ENCODE measurements at regions of chr12 and their contacts with region 1.

Region 1: GRCh38 chr12:93733358-93733757 is 56.2 kb downstream of the CRADD start:
- DNase-seq: peak; percentile 14 to 31
- ATAC-seq: peak; percentile 42 to 83 (median 62)
- H3K4me3 ChIP-seq: no peak overlapping the region
- H3K27ac ChIP-seq: no peak overlapping the region
- H3K4me1 ChIP-seq: peaks cover 0 to 26% (median 17%) of the 10 kb centered on the region in 9 donors
- H3K27me3 ChIP-seq: no peaks in the 10 kb centered on the region
- CTCF ChIP-seq: no peak

Region 2: DNA sequence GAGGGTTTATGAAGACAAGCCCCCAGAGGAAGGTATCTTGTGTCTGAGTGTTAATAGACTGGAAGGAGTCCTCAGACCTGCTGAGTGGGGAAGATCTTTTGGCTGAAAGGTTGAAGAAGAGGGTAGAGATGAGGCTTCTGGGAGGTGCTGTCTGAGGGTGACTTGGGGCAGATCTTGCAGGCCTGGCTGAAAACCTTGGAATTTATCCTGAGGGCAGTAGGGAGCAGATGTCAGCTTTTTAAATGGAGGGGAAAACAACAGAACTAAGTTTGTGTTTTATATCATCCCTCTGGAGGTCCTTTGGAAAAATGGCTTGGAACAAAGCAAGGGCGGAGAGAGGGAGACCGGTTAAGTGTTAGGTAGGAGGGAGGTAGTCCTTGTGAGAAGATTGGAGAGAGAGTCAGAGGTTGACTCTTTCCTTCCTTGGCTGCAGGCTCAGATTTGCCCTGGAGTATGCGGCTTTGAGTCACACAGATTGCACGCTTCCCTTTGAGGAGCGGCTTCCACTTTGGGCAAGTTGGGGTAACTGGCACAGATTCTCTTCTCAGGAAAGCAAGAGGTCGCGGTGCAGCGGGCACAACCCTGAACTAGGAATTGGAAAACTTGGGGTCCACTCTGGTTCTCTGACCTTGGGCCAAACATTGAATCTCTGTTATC is 151.1 kb before region 1 on chr12:
- intact Hi-C with region 1: loop called in 1 of 10 experiments (anchors 5 kb)
- DNase-seq: no peak
- ATAC-seq: no peak
- H3K4me3 ChIP-seq: no peak overlapping the region
- H3K27ac ChIP-seq: no peak overlapping the region
- H3K4me1 ChIP-seq: peaks cover 0 to 38% (median 28%) of the 10 kb centered on the region in 9 donors
- H3K27me3 ChIP-seq: no peaks in the 10 kb centered on the region
- CTCF ChIP-seq: no peak

Region 3: DNA sequence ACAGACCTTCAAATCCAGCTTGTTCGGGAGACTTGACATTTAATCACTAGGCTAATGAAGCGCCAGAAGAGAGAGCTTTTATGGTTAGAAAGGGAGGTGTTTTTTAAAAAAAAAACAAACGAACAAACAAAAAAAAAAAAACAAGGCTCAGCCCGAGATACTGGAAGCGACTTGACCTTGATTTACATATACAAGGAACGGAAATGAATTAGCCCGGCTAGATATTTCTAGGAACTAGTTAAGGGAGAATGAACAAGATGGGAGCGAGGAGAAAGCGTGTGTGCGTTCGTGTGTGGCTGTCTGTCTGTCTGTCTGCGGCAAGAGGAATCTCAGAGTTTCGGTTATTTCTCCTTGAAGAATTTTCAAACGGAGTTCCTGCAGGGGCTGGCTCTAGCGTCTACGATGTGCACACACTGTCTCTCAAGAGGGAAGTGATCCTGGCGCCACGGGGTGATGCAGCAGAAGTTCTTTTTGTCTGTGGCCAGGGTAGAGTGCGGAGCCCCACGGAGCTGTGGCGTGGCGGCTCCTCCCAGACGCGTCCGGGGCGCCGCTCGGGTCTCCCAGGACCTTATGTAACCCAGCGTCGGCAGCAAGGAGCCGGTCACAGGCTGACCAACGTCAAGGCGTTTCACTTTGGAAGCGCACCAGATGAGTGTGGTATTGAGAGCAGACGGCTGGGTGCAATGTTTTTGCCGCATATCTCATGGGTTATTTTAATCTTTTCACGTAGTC is 142.1 kb before region 1 on chr12:
- intact Hi-C with region 1: loop called in 2 of 10 experiments (anchors 2 to 5 kb)
- DNase-seq: peak; percentile 81 to 86
- ATAC-seq: peak; percentile 93 to 98 (median 94)
- H3K4me3 ChIP-seq: peak overlapping the region; percentile 22 to 67 (median 60)
- H3K27ac ChIP-seq: peak overlapping the region; percentile 71 to 95 (median 88)
- H3K4me1 ChIP-seq: peaks cover 0 to 45% (median 36%) of the 10 kb centered on the region in 9 donors
- H3K27me3 ChIP-seq: peaks cover 0 to 35% (median 0%) of the 10 kb centered on the region in 7 donors
- CTCF ChIP-seq: no peak

Region 4: GRCh38 chr12:93847517-93848474 is 114.4 kb after region 1 on chr12:
- intact Hi-C with region 1: no loop called
- DNase-seq: no peak
- ATAC-seq: no peak
- H3K4me3 ChIP-seq: no peak overlapping the region
- H3K27ac ChIP-seq: peak overlapping the region in 2 of 10 donors; percentile 68 to 85
- H3K4me1 ChIP-seq: peaks cover 0 to 26% (median 11%) of the 10 kb centered on the region in 9 donors
- H3K27me3 ChIP-seq: no peaks in the 10 kb centered on the region
- CTCF ChIP-seq: no peak

Measured in heart right ventricle (tissue), 16 donors.